ENCODE measurements at regions of chr10 and their contacts with region 1.

Region 1: DNA sequence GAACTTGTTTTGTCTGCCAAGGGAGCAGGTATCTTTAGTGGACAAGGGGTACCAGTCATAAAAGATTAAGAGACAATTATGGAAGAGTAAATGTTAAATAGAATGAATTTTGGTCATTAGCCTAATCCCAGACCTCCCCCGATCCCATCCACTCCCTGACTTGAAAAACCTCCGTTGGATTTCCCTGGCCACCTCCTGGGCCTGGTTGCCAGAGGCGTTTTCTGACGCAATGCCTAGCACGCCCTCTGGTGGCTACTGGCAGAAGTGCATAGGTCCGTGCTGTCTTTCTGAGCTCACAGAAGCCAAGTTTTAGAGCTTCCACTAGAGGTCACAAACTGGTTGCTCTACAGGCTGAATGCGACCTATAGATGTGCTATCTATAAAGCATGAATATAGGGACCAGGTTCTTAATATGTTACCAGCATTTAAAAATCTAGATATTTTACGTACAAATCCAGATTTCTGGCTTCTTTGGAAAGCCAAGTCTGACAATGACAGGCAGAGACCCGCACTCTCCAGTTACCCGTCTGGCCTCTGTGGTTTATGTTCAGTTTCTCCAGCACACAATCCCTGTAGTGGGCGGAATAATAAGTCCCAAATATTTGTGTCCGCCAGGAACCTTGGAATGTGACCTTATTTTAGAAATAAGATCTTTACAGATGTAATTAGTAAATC is 39.8 kb downstream of the SPOCK2 start:
- DNase-seq: peak; percentile 92 to 94
- ATAC-seq: peak; percentile 90 to 92
- H3K4me3 ChIP-seq: no peak overlapping the region
- H3K27ac ChIP-seq: peak overlapping the region; percentile 68 to 72
- H3K4me1 ChIP-seq: peaks cover 3% of the 10 kb centered on the region; the same call in 1 of the 3 replicates
- CTCF ChIP-seq: peak; percentile 100
- EP300 ChIP-seq: no peak
- POLR2A ChIP-seq: no peak
- RAD21 ChIP-seq: peak; percentile 98 to 99

Region 2: GRCh38 chr10:71957546-71958275 is 90.9 kb before region 1 on chr10:
- CTCF ChIA-PET with region 1: interaction called, 207 read pairs
- POLR2A ChIA-PET with region 1: interaction called, 3 read pairs
- DNase-seq: peak in 1 of 2 experiments; percentile 47
- ATAC-seq: peak in 1 of 2 experiments; percentile 52; a peak in 3 of 6 replicates
- H3K4me3 ChIP-seq: no peak overlapping the region
- H3K27ac ChIP-seq: peak overlapping the region; percentile 72 to 84; a peak in 5 of 6 replicates
- H3K4me1 ChIP-seq: peaks cover 23% of the 10 kb centered on the region
- CTCF ChIP-seq: peak; percentile 23; the same call in 2 of the 3 replicates
- EP300 ChIP-seq: no peak
- POLR2A ChIP-seq: no peak
- RAD21 ChIP-seq: no peak

Region 3: GRCh38 chr10:71985542-71986250 is 62.9 kb before region 1 on chr10:
- CTCF ChIA-PET with region 1: interaction called, 11 read pairs
- POLR2A ChIA-PET with region 1: no interaction called
- DNase-seq: no peak
- ATAC-seq: peak; percentile 19 to 47; a peak in 3 of 6 replicates
- H3K4me3 ChIP-seq: no peak overlapping the region
- H3K27ac ChIP-seq: peak overlapping the region in 1 of 2 experiments; percentile 47; a peak in 2 of 6 replicates
- H3K4me1 ChIP-seq: peaks cover 24% of the 10 kb centered on the region
- CTCF ChIP-seq: no peak
- EP300 ChIP-seq: no peak
- POLR2A ChIP-seq: no peak
- RAD21 ChIP-seq: no peak

Region 4: GRCh38 chr10:72030762-72031543 is 17.6 kb before region 1 on chr10:
- CTCF ChIA-PET with region 1: interaction called, 72 read pairs
- POLR2A ChIA-PET with region 1: no interaction called
- DNase-seq: no peak
- ATAC-seq: no peak; a peak in 1 of 6 replicates
- H3K4me3 ChIP-seq: no peak overlapping the region
- H3K27ac ChIP-seq: peak overlapping the region in 1 of 2 experiments; percentile 3; a peak in 2 of 6 replicates
- H3K4me1 ChIP-seq: peaks cover 24% of the 10 kb centered on the region
- CTCF ChIP-seq: no peak
- EP300 ChIP-seq: no peak
- POLR2A ChIP-seq: no peak
- RAD21 ChIP-seq: no peak

Region 5: GRCh38 chr10:72069751-72070526 is 21.4 kb after region 1 on chr10:
- CTCF ChIA-PET with region 1: interaction called, 66 read pairs
- POLR2A ChIA-PET with region 1: no interaction called
- DNase-seq: no peak
- ATAC-seq: peak in 1 of 2 experiments; percentile 44; a peak in 2 of 6 replicates
- H3K4me3 ChIP-seq: no peak overlapping the region
- H3K27ac ChIP-seq: no peak overlapping the region
- H3K4me1 ChIP-seq: no peaks in the 10 kb centered on the region
- CTCF ChIP-seq: peak; percentile 21; the same call in 2 of the 3 replicates
- EP300 ChIP-seq: no peak
- POLR2A ChIP-seq: no peak
- RAD21 ChIP-seq: peak in 1 of 2 experiments; percentile 24; a peak in 1 of 5 replicates

Region 6: DNA sequence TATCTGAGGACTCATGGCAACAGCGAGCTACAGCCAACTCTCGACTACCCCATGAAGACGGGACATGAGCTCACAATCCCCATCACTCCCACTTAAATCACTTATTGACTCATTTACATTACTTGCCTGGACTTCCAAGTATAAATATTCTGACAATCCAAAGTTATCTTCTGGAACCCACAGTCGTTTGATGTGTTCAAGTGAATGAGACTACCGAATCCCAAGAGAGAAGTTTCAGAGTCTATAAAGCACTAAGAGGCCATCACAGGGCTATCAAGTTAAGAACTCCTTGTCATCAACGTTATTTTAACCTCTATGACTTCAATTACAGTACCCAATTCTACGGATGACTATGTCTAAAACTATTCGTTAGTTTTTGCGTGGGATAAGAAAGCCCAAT is 155.7 kb after region 1 on chr10:
- CTCF ChIA-PET with region 1: no interaction called
- POLR2A ChIA-PET with region 1: no interaction called
- DNase-seq: no peak
- ATAC-seq: no peak
- H3K4me3 ChIP-seq: no peak overlapping the region
- H3K27ac ChIP-seq: no peak overlapping the region
- H3K4me1 ChIP-seq: no peaks in the 10 kb centered on the region
- CTCF ChIP-seq: no peak
- EP300 ChIP-seq: no peak
- POLR2A ChIP-seq: no peak
- RAD21 ChIP-seq: no peak

Region 7: GRCh38 chr10:72223743-72224101 is 175.1 kb after region 1 on chr10:
- CTCF ChIA-PET with region 1: interaction called, 27 read pairs
- POLR2A ChIA-PET with region 1: no interaction called
- DNase-seq: no peak
- ATAC-seq: no peak
- H3K4me3 ChIP-seq: no peak overlapping the region
- H3K27ac ChIP-seq: peak overlapping the region; percentile 66 to 82
- H3K4me1 ChIP-seq: peaks cover 38% of the 10 kb centered on the region
- CTCF ChIP-seq: no peak
- EP300 ChIP-seq: no peak
- POLR2A ChIP-seq: no peak
- RAD21 ChIP-seq: no peak

Measured in A549 (cell line).